ENCODE measurements at regions of chr16 and their contacts with region 1.

Region 1: DNA sequence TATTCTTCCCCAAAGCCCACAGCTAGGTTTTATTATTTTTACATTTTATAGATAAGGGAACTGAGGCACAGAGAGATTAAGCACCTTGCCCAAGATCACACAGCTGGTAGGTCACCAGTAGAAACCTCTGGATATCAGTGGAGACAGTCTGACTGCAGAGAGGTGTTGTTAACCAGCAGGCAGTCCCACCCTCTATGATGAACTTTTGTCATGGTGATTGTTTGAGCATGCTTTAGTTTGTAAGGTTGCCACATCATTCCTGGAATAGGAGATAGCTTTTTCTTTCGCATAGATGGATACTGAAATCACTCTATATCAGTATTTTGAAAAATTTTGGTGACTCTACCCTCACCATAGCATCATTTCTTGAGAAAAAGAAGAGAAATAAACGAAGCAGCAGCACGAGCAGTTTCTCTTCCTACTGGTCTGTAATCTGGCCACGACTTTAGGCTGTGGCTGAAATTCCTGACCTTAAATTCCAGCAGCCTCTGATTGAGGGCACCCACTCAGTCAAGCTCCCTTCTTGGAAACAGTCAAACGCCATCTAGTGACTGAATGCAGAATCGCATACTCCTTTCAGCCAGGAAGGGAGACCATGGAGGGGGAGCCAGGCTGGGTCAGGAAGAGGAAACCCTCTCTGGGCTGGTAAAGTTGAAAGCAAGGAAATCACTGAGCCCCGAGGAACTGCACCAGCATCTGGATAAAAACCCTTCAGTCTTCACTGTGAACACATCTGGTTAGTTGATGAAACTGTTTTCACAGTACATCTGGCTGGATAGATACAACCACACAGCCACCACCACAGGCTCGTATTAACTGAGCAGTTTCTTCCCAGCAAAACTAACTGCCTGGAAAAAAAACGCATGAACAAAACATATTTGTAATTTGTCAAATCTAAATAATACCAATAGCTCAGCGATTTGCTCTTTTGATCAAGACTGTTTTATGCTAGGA is 108.4 kb upstream of the XYLT1 start:
- DNase-seq: peak; percentile 59
- ATAC-seq: peak; percentile 100
- H3K4me3 ChIP-seq: no peak overlapping the region
- H3K27ac ChIP-seq: no peak overlapping the region
- H3K4me1 ChIP-seq: no peaks in the 10 kb centered on the region
- H3K27me3 ChIP-seq: peaks cover 15% of the 10 kb centered on the region
- CTCF ChIP-seq: peak; percentile 76 to 89 (median 86)
- POLR2A ChIP-seq: no peak
- RAD21 ChIP-seq: peak; percentile 71

Region 2: DNA sequence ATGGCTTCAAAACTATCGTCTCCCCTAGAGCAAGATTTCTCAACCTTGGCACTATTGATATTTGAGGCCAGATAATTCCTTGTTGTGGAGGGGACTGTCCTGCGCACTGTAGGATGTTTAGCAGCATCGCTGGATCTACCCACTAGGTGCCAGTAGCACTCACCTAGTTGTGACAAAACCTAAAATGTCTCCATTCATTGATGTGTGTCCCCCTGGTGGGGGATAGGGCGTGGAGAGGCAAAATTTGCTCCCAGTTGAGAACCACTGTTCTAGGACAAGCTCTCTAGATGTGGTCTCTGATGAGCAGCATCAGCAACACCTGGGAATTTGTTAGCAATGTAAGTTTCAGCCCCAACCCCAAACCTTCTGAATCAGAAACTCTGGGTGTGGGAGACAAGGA is 367.4 kb before region 1 on chr16:
- CTCF ChIA-PET with region 1: no interaction called
- POLR2A ChIA-PET with region 1: no interaction called
- RAD21 ChIA-PET with region 1: no interaction called
- intact Hi-C with region 1: loop called (anchors 10 kb)
- DNase-seq: peak; percentile 15
- ATAC-seq: peak; percentile 87
- H3K4me3 ChIP-seq: no peak overlapping the region
- H3K27ac ChIP-seq: no peak overlapping the region
- H3K4me1 ChIP-seq: no peaks in the 10 kb centered on the region
- H3K27me3 ChIP-seq: no peaks in the 10 kb centered on the region
- CTCF ChIP-seq: peak; percentile 58 to 86 (median 61)
- POLR2A ChIP-seq: no peak
- RAD21 ChIP-seq: peak; percentile 64

Region 3: GRCh38 chr16:17224879-17225281 is 354.3 kb before region 1 on chr16:
- CTCF ChIA-PET with region 1: no interaction called
- POLR2A ChIA-PET with region 1: no interaction called
- RAD21 ChIA-PET with region 1: no interaction called
- intact Hi-C with region 1: no loop called
- DNase-seq: no peak
- ATAC-seq: no peak
- H3K4me3 ChIP-seq: no peak overlapping the region
- H3K27ac ChIP-seq: no peak overlapping the region
- H3K4me1 ChIP-seq: no peaks in the 10 kb centered on the region; a peak in 1 of 4 replicates
- H3K27me3 ChIP-seq: peaks cover 10% of the 10 kb centered on the region; the same call in 1 of the 2 replicates
- CTCF ChIP-seq: no peak
- POLR2A ChIP-seq: no peak
- RAD21 ChIP-seq: no peak

Region 4: DNA sequence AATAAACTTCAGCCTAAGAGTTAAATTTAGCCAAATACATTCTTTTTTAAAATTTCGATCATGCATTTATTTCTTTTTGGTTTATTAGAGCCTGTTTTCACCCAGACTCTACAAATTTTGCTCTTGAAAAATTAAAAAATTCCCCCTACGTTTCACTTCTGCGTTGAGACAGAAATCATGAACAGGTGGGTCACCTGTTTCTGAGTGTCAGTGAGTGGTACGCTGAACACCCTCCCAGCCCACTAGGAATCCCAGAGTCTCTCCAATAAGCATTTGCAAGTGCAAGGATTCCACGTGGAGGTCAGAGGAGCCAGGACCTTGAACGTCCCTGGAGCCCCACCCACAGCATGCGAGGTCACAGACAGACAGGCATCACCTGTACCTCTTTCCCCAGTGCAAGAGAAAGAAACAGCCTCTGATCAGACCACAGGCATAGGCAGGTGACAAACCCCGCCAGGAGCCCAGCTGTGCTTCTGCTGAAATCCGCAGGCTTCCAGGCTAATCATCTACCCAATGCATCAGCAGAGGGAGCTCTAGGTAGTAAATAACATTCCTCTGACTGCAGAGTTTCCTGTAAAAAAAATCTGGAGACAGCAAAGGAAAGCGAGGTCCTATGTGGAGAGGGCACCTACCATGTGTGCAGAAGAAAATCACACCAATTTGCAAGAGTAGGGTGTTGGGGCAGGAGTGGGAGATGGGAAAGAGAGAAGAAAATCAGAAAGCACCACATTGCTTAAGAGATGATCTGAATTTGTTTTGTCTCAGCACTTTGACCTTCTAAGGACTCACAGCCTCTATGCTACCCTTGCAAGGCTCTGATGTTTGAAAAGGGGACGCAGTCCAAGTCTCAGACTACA is 102.6 kb before region 1 on chr16:
- CTCF ChIA-PET with region 1: interaction called, 6 read pairs
- POLR2A ChIA-PET with region 1: no interaction called
- RAD21 ChIA-PET with region 1: no interaction called
- intact Hi-C with region 1: loop called (anchors 5 kb)
- DNase-seq: peak; percentile 47
- ATAC-seq: peak; percentile 96
- H3K4me3 ChIP-seq: no peak overlapping the region
- H3K27ac ChIP-seq: no peak overlapping the region
- H3K4me1 ChIP-seq: 0 out of 4 replicates have a peak, but pooled peaks cover 0 to 6% of the 10 kb centered on the region in 2 experiments
- H3K27me3 ChIP-seq: peaks cover 30% of the 10 kb centered on the region; the same call in 1 of the 2 replicates
- CTCF ChIP-seq: peak; percentile 46 to 59 (median 53); a peak in 4 of 6 replicates
- POLR2A ChIP-seq: no peak
- RAD21 ChIP-seq: peak; percentile 61

Region 5: DNA sequence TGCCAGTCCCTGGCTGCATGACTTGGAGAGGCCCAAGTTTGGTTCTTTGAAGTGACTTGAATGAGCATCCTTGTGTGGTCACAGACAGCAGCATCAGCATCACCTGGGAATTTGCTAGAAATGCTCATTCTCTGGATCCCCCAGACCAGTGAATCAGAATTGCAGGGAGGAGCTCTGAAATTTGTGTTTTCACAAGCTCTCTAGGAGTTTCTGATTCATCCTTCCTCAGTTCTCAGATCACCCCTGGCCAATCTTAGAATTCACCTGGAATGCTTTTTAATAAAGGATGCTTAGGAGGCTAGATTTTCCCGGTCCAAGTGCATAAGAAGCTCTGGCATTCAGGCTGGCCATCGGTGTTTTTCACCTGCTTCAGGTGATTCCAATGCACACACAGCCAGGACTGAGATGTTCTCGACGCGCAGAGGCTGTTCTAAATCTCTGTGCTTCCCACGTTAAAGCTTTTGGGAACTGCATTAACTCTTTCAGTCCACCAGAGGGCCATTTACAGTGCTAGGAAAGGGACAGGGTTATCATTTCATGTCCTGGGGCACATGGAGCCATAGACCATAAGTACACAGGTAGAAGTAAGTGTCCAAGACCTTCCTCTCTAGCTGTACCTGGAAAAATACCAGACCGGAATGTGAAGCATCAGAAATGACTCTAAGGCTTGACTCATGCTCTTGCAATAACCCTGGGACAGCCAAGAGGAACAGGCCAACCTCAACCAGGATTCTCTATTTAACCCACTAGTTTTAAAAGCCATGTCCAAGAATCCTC is 22.7 kb before region 1 on chr16:
- CTCF ChIA-PET with region 1: interaction called, 22 read pairs
- POLR2A ChIA-PET with region 1: no interaction called
- RAD21 ChIA-PET with region 1: no interaction called
- intact Hi-C with region 1: loop called (anchors 1 kb)
- DNase-seq: peak; percentile 34
- ATAC-seq: peak; percentile 89
- H3K4me3 ChIP-seq: no peak overlapping the region
- H3K27ac ChIP-seq: no peak overlapping the region
- H3K4me1 ChIP-seq: no peaks in the 10 kb centered on the region
- H3K27me3 ChIP-seq: no peaks in the 10 kb centered on the region
- CTCF ChIP-seq: peak; percentile 48 to 76 (median 75); a peak in 5 of 6 replicates
- POLR2A ChIP-seq: no peak
- RAD21 ChIP-seq: peak; percentile 62

Region 6: DNA sequence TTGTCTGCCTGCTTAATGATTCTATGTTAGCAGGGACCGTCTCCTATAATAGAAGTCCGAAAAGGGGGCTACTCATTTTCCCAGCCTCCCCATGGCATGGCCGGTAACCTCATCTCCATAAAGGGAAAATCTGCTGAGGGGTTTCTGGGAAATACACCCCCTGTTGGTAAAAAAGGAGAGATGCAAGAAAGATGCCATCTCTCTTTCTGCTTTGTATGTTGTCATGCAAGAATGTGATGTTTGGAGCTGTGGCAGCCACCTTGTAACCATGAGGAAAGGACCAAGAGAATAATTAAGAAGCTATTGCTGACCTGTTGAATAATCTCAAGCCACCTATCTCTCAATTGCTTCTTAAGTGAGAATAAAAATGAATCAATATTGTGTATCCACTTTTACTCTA is 13.6 kb before region 1 on chr16:
- CTCF ChIA-PET with region 1: interaction called, 16 read pairs
- POLR2A ChIA-PET with region 1: no interaction called
- RAD21 ChIA-PET with region 1: no interaction called
- intact Hi-C with region 1: no loop called
- DNase-seq: peak; percentile 4
- ATAC-seq: peak; percentile 52; the same call in 1 of the 2 replicates
- H3K4me3 ChIP-seq: no peak overlapping the region
- H3K27ac ChIP-seq: no peak overlapping the region
- H3K4me1 ChIP-seq: no peaks in the 10 kb centered on the region
- H3K27me3 ChIP-seq: peaks cover 7% of the 10 kb centered on the region; the same call in 1 of the 2 replicates
- CTCF ChIP-seq: peak; percentile 10 to 60 (median 57); a peak in 4 of 6 replicates
- POLR2A ChIP-seq: no peak
- RAD21 ChIP-seq: peak; percentile 29; the same call in 1 of the 2 replicates

Region 7: GRCh38 chr16:17723531-17724134 is 144.4 kb after region 1 on chr16:
- CTCF ChIA-PET with region 1: no interaction called
- POLR2A ChIA-PET with region 1: no interaction called
- RAD21 ChIA-PET with region 1: no interaction called
- intact Hi-C with region 1: no loop called
- DNase-seq: no peak
- ATAC-seq: no peak
- H3K4me3 ChIP-seq: no peak overlapping the region
- H3K27ac ChIP-seq: no peak overlapping the region
- H3K4me1 ChIP-seq: no peaks in the 10 kb centered on the region
- H3K27me3 ChIP-seq: 0 out of 2 replicates have a peak, but pooled peaks cover 15% of the 10 kb centered on the region
- CTCF ChIP-seq: no peak
- POLR2A ChIP-seq: no peak
- RAD21 ChIP-seq: no peak

Region 8: DNA sequence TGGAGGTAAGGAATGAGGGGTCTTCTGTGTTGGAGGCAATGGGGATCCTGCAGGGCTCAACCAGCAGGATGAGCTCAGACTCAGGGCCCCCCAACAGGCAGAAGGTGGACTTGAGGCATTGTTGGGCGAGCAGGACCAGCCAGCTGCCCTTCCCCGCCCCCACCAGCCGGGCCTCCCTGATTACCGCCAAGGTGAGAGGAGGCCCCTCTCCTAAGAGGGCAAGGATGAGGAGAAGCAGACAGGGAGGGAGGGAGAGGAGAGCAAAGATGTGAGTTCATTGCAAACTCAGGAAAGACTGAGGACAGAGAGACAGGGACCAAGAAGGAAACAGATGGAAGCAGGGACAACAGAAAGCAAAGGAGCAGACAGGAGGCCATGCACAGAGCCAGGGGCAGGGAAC is 164.4 kb after region 1 on chr16:
- CTCF ChIA-PET with region 1: no interaction called
- POLR2A ChIA-PET with region 1: no interaction called
- RAD21 ChIA-PET with region 1: no interaction called
- intact Hi-C with region 1: no loop called
- DNase-seq: no peak
- ATAC-seq: no peak
- H3K4me3 ChIP-seq: no peak overlapping the region
- H3K27ac ChIP-seq: no peak overlapping the region
- H3K4me1 ChIP-seq: no peaks in the 10 kb centered on the region
- H3K27me3 ChIP-seq: peaks cover 26% of the 10 kb centered on the region
- CTCF ChIP-seq: no peak
- POLR2A ChIP-seq: no peak
- RAD21 ChIP-seq: no peak

Region 9: DNA sequence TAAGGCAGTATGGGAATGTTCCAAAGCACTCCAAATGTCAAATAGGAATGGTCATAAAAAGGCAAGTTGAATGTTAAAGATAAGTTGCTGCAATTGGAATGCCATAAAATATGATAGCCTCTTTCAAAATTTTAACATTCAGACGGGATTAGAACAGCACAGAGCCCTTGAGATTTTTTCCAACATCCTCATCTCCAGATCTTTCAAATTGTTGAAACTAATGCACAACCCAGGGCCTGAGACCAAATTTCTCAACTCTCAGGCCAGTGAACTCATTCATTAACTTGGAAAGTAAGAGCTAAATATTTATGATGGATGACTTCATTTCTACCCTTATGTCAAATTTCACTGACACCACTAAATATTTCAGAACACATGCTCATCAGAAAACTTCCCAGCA is 238.1 kb after region 1 on chr16:
- CTCF ChIA-PET with region 1: no interaction called
- POLR2A ChIA-PET with region 1: no interaction called
- RAD21 ChIA-PET with region 1: no interaction called
- intact Hi-C with region 1: no loop called
- DNase-seq: no peak
- ATAC-seq: no peak
- H3K4me3 ChIP-seq: no peak overlapping the region
- H3K27ac ChIP-seq: no peak overlapping the region
- H3K4me1 ChIP-seq: no peaks in the 10 kb centered on the region
- H3K27me3 ChIP-seq: peaks cover 7% of the 10 kb centered on the region
- CTCF ChIP-seq: no peak
- POLR2A ChIP-seq: no peak
- RAD21 ChIP-seq: no peak

Measured in HCT116 (cell line).